ENCODE measurements at regions of chr7 and their contacts with region 1.

Region 1: GRCh38 chr7:73451780-73452398 is 18.3 kb downstream of the FZD9 start:
- DNase-seq: no peak
- ATAC-seq: peak; percentile 85

Region 2: GRCh38 chr7:73316521-73316920 is 135.4 kb before region 1 on chr7:
- intact Hi-C with region 1: loop called in 1 of 2 experiments (anchors 5 kb)
- DNase-seq: no peak
- ATAC-seq: no peak

Region 3: GRCh38 chr7:73941836-73942551 is 490.1 kb after region 1 on chr7:
- intact Hi-C with region 1: no loop called
- DNase-seq: no peak
- ATAC-seq: no peak

Measured in left colon (tissue), 2 donors.